MCF 10A (cell line): ENCODE measurements at regions of chr5 and their contacts with region 1.

Region 1: DNA sequence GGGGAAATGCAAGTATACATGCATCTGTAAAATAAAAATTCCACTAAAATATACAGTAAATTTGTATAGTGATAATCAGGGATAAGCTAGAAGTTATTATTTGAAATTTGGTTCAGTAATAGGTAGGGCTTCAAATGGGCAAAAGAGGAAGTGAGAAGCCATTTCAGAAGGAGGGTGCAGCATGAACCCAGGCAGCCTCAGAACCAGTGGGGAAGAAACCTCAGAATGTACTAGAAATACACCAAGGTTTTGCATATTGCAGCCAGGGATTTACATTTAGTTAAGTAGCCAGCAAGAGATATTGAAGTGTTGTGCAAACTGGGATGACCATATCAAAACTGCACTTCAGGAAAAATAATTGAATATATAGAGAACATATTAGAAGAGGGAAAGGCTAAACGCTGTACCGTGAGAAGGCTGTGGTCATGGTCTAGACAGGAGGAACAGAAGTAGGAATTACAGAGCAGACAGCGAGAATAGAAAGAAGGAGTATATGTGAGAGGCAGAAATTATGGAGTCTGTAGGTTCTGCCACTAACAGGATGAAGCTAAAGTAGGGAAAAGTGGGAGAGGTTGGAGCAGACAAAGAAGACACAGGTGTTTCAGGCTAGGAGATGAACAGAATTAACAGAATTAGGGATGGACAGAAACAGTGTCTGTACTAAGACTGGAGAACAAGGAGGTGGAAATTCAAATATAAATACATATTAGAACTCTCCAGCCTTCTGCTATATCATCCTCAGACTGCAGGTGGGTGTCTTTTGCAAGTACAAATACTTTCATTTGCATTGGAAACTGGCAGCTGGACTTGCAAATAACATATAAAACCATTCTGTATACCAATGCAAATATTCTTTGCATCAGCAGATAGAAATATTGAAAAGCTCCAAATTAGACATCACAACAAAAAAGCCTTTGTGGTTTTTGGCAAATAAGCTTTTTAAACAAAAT is 335.6 kb downstream of the ZNF608 start:
- DNase-seq: no peak
- H3K4me3 Mint-ChIP-seq: no peak overlapping the region
- H3K27ac Mint-ChIP-seq: no peak overlapping the region
- H3K4me1 Mint-ChIP-seq: no peaks in the 10 kb centered on the region
- H3K27me3 Mint-ChIP-seq: no peaks in the 10 kb centered on the region
- CTCF ChIP-seq: peak; percentile 14

Region 2: DNA sequence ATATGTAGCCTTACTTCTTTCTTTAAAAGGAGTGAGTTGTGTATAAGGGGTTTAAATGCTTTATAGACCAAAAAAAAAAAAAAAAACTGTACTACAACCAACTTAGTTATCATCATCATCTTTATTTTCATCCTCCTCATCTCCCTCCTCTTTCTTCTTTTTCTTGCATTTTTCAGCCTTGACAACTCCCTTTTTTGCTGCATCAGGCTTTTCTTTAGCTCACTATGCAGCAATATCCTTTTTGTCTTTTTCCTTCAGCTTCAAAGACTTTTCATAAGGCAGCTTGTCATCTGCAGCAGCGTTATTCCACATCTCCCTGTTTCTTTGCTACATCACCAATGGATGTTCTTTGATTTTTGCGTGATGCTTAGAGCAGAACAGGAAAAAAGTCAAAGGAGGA is 190.4 kb before region 1 on chr5:
- CTCF ChIA-PET with region 1: no interaction called
- POLR2A ChIA-PET with region 1: no interaction called
- intact Hi-C with region 1: no loop called
- DNase-seq: no peak
- H3K4me3 Mint-ChIP-seq: no peak overlapping the region
- H3K27ac Mint-ChIP-seq: no peak overlapping the region
- H3K4me1 Mint-ChIP-seq: no peaks in the 10 kb centered on the region
- H3K27me3 Mint-ChIP-seq: no peaks in the 10 kb centered on the region
- CTCF ChIP-seq: no peak

Region 3: GRCh38 chr5:124274949-124275348 is 135.9 kb before region 1 on chr5:
- CTCF ChIA-PET with region 1: no interaction called
- POLR2A ChIA-PET with region 1: no interaction called
- intact Hi-C with region 1: no loop called
- DNase-seq: peak; percentile 82
- H3K4me3 Mint-ChIP-seq: no peak overlapping the region
- H3K27ac Mint-ChIP-seq: no peak overlapping the region
- H3K4me1 Mint-ChIP-seq: peaks cover 11% of the 10 kb centered on the region
- H3K27me3 Mint-ChIP-seq: no peaks in the 10 kb centered on the region
- CTCF ChIP-seq: no peak

Region 4: GRCh38 chr5:125043781-125044391 is 633.1 kb after region 1 on chr5:
- CTCF ChIA-PET with region 1: no interaction called
- POLR2A ChIA-PET with region 1: no interaction called
- intact Hi-C with region 1: loop called (anchors 5 kb)
- DNase-seq: peak; percentile 99
- H3K4me3 Mint-ChIP-seq: no peak overlapping the region
- H3K27ac Mint-ChIP-seq: peak overlapping the region; percentile 70
- H3K4me1 Mint-ChIP-seq: peaks cover 34% of the 10 kb centered on the region
- H3K27me3 Mint-ChIP-seq: no peaks in the 10 kb centered on the region
- CTCF ChIP-seq: no peak